AG04449 (cell line): ENCODE measurements at regions of chr15 and their contacts with region 1.

Region 1: DNA sequence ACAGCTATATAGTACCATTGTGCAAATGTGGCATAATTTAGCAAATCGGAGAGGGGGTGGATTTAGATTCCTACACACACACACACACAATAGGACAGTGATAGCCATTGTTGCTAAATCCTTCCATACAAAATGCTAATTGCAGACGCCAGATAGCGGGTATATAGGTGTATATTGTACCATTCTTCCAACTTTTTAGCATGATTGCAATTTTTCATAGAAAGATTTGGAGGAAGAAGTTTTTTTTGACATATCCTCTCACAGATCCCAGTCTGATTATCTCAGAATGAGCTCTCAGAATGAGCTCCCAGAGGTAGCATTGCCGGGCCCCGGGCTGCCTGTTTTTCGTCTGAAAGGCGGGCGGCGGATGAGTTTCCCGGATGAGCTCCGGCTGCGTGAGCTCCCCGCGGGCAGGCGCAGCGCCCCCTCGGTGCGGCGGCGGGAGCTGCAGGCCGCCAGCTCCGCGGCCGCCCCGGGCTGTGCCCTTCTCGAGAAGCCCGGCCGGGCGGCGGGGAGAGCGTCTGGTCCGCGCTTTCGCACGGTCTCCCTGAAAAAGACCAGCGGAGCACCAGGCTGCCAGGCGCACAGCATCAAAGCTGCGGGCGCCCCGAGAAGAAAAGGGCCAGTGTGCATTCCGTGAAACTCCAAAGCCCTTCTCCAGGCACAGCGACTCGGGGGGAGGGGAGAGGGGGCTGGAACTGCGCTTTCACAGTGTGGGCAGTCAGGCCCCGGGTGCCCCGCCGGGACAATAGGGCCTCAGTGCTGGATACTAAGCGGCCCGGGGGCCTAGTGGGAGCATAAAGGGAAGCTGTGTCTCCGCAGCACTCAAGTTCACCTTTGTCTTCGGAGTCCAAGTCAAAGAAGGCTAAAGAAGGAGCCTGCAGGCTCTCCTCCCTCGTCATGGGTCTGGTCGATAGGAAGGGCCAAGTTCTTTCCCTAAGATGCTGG is 12.0 kb upstream of the SHC4 start:
- DNase-seq: no peak
- H3K4me3 ChIP-seq: peak overlapping the region; percentile 57
- CTCF ChIP-seq: peak; percentile 78

Region 2: DNA sequence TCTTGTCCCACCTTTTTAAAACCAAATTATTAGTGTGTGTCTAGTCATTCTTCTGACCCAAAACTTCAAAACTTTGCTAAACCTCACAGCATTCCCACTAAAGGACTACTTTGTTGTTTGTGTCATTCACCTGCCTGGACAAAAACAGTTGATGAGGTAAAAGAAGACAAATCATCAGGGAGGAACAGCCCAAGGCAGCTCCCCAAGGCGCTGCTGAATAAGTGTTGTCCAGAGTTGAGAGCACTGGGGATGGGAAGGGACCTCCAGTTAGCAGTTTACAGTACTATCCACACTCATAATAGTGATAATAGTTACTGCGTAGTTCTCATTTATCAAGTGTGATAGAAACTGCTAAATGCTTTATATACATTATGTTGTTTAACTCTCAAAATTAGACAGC is 140.3 kb before region 1 on chr15:
- CTCF ChIA-PET with region 1: no interaction called
- POLR2A ChIA-PET with region 1: no interaction called
- DNase-seq: no peak
- H3K4me3 ChIP-seq: no peak overlapping the region
- CTCF ChIP-seq: no peak

Region 3: GRCh38 chr15:48855501-48856440 is 120.0 kb before region 1 on chr15:
- CTCF ChIA-PET with region 1: no interaction called
- POLR2A ChIA-PET with region 1: no interaction called
- DNase-seq: peak; percentile 23
- H3K4me3 ChIP-seq: no peak overlapping the region
- CTCF ChIP-seq: peak; percentile 43

Region 4: GRCh38 chr15:48868536-48868935 is 107.2 kb before region 1 on chr15:
- CTCF ChIA-PET with region 1: interaction called, 14 read pairs
- POLR2A ChIA-PET with region 1: no interaction called
- DNase-seq: peak; percentile 54
- H3K4me3 ChIP-seq: no peak overlapping the region
- CTCF ChIP-seq: no peak

Region 5: DNA sequence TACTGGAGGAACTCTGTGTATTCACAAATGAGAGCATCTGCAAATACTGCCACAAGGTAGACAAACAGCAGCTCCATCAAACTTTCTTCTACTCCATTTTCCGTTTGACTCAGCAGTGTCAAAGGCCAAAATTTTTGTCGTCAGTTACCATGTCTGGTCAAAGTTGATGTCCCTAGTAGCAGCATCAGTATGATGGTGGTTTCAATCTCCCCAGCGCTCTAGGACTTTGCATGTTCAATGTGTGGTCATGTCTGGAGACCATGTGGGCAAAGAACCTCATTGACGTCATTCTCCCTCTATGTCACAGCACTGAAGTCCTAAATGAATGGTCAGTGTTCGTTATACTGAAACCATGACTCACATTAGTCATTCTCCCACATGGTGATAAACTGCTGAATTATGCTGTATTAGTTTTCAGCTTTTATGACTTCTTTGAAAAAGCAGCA is 35.3 kb before region 1 on chr15:
- CTCF ChIA-PET with region 1: interaction called, 13 read pairs
- POLR2A ChIA-PET with region 1: no interaction called
- DNase-seq: peak; percentile 92
- H3K4me3 ChIP-seq: no peak overlapping the region
- CTCF ChIP-seq: no peak

Region 6: GRCh38 chr15:48992545-48992944 is 16.8 kb after region 1 on chr15:
- CTCF ChIA-PET with region 1: interaction called, 113 read pairs
- POLR2A ChIA-PET with region 1: no interaction called
- DNase-seq: no peak
- H3K4me3 ChIP-seq: no peak overlapping the region
- CTCF ChIP-seq: no peak

Region 7: DNA sequence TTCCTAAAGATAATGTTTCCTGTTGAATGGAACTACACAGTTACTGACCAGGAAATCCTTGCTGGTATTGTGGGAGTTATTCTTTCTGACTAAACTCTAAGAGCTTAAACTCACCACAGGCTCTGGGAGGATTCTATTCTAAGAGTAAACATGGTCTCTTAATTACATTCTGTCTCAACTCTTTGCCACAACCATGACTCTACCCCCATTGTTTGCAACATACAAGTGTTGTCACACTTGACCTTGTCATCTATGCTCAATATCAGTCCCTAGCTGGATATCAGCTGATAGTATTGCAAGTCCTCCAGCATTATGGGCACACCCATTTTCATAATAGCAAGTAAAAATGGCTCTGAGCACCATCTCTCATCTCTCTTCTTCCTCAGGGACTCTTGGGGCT is 100.1 kb after region 1 on chr15:
- CTCF ChIA-PET with region 1: no interaction called
- POLR2A ChIA-PET with region 1: no interaction called
- DNase-seq: no peak
- H3K4me3 ChIP-seq: no peak overlapping the region
- CTCF ChIP-seq: no peak

Region 8: DNA sequence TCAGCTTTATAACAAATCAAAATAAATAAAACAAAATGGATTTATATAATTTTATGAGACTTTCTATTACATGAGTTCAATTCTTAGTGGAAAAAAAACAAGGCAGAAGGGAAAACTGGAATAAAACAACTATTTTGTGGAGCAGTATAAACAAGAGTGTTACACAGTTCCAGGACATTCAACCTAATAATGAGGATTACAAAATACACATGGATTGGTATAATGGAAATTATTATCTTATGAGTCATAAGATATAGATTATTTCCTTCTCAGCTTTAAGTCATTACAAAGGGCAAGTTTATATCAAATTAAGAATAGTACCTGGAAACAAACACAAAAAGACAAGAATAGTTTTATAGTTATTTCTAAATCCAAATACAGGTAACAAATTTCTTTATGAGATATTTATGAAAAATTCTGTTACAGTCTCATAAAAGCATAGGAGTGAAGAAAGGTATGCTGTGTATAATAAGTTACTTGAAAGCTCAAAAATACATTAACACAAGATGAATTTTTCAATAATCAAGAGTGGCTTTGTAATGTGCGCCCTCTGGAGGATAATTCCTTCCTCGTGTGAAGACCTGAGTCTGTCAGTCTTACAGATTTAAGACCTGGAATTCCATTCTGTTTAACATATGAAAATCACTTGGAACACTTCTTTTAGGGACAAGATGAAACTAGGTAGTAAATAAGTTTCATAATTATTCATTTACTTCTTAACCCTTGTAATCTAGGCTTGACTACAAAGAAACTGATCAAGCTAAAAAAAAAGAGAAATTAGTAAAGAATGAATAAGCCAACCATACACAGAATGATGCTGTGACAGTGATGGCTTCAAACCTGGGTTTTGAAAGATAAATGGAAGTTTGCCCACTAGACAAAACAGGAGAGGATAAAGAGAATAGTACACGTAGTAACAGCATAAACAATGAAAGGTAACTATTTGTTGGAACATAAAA is 170.2 kb after region 1 on chr15:
- CTCF ChIA-PET with region 1: interaction called, 12 read pairs
- POLR2A ChIA-PET with region 1: no interaction called
- DNase-seq: no peak
- H3K4me3 ChIP-seq: no peak overlapping the region
- CTCF ChIP-seq: peak; percentile 61